H1 (cell line): ENCODE measurements at regions of chr15 and their contacts with region 1.

Region 1: DNA sequence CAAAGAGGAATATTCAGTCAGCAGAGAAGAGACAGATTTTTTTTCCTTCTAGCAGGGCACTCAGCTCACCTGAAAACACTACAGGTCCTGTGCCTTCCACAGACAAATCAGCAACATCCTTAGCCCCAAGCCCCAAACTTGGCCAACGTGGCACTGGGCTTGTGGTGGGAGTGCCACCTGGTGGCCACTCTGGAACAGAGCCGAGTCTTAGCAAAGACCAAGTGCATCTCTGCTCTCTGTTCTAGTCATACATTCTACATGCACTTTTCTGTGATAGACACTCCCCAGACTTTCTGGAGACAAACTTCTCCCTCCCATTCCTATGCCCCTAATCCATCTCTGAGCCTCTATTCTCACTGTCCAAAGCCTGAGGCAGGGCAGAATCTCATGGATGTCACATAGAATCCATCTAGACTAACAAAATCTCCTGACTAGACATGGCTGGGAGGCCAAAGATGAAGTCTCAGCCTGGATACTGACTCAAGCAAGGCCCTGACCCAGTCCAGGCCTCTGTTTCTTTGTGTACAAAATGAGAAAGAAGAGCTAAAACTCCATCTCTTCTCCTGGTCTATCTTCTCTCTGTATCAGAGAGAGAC is 5.1 kb upstream of the SEMA7A start:
- DNase-seq: peak in 1 of 2 experiments; percentile 80
- H3K4me3 ChIP-seq: no peak overlapping the region
- H3K27ac ChIP-seq: no peak overlapping the region
- H3K4me1 ChIP-seq: peaks cover 0 to 5% (median 3%) of the 10 kb centered on the region in 4 experiments; a peak in 6 of 7 replicates
- H3K27me3 ChIP-seq: peaks cover 0 to 5% (median 0%) of the 10 kb centered on the region in 4 experiments; a peak in 3 of 7 replicates
- CTCF ChIP-seq: peak; percentile 94 to 99 (median 97)
- EP300 ChIP-seq: no peak
- POLR2A ChIP-seq: no peak
- RAD21 ChIP-seq: peak; percentile 96 to 98

Region 2: DNA sequence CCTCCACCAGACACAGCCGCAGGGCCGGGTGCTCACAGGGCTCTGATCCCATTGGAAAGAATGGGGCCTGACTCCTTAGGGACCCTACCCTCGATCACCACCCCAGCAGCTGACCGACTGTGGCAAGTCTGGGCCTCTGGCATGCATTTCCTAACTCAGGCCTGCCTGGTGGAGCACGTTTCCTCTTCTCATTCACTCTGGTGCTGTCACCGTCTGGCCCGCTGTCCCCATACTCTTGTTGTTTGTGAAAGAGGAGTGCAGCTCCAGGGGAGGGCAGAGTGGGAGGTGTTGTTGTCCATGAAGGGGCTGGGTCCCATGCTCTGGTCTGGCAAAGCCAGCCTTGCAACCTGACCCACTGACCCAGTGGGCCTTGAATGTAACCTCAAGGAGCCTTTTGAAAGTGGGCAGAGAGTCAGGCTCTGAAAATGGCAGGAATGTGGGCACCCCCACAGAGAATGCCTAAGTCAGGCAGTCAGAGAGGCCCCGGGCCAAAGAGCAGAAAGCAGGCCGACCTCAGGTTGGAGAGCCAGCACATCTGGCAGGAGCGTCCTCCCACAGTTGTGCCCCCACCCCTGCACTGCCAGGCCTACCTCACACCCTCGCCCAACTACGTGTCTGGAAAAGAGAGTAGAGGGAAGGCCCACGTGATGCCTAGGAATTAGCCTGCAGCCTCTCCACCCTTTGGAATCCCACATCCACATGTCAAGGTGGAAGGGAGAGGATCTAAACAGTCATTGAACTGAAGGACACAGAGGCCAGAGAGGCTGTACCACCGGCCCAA is 16.0 kb before region 1 on chr15:
- CTCF ChIA-PET with region 1: interaction called, 66 read pairs
- POLR2A ChIA-PET with region 1: interaction called, 5 read pairs
- DNase-seq: peak in 1 of 2 experiments; percentile 70
- H3K4me3 ChIP-seq: no peak overlapping the region
- H3K27ac ChIP-seq: no peak overlapping the region
- H3K4me1 ChIP-seq: peaks cover 7 to 27% (median 20%) of the 10 kb centered on the region in 4 experiments
- H3K27me3 ChIP-seq: no peaks in the 10 kb centered on the region
- CTCF ChIP-seq: no peak
- EP300 ChIP-seq: no peak
- POLR2A ChIP-seq: no peak
- RAD21 ChIP-seq: no peak

Region 3: GRCh38 chr15:74451861-74452710 is 13.3 kb after region 1 on chr15:
- CTCF ChIA-PET with region 1: interaction called, 78 read pairs
- POLR2A ChIA-PET with region 1: interaction called, 5 read pairs
- DNase-seq: no peak
- H3K4me3 ChIP-seq: no peak overlapping the region
- H3K27ac ChIP-seq: no peak overlapping the region
- H3K4me1 ChIP-seq: no peaks in the 10 kb centered on the region; a peak in 1 of 7 replicates
- H3K27me3 ChIP-seq: no peaks in the 10 kb centered on the region
- CTCF ChIP-seq: no peak
- EP300 ChIP-seq: no peak
- POLR2A ChIP-seq: no peak
- RAD21 ChIP-seq: no peak

Region 4: GRCh38 chr15:74482661-74483060 is 43.8 kb after region 1 on chr15:
- CTCF ChIA-PET with region 1: interaction called, 17 read pairs
- POLR2A ChIA-PET with region 1: no interaction called
- DNase-seq: no peak
- H3K4me3 ChIP-seq: no peak overlapping the region
- H3K27ac ChIP-seq: no peak overlapping the region
- H3K4me1 ChIP-seq: peaks cover 0 to 2% (median 0%) of the 10 kb centered on the region in 4 experiments; a peak in 2 of 7 replicates
- H3K27me3 ChIP-seq: no peaks in the 10 kb centered on the region
- CTCF ChIP-seq: peak; percentile 44 to 55 (median 48)
- EP300 ChIP-seq: no peak
- POLR2A ChIP-seq: no peak
- RAD21 ChIP-seq: peak; percentile 35 to 51; a peak in 3 of 4 replicates